A549 (cell line): ENCODE measurements at regions of chr3 and their contacts with region 1.

Region 1: DNA sequence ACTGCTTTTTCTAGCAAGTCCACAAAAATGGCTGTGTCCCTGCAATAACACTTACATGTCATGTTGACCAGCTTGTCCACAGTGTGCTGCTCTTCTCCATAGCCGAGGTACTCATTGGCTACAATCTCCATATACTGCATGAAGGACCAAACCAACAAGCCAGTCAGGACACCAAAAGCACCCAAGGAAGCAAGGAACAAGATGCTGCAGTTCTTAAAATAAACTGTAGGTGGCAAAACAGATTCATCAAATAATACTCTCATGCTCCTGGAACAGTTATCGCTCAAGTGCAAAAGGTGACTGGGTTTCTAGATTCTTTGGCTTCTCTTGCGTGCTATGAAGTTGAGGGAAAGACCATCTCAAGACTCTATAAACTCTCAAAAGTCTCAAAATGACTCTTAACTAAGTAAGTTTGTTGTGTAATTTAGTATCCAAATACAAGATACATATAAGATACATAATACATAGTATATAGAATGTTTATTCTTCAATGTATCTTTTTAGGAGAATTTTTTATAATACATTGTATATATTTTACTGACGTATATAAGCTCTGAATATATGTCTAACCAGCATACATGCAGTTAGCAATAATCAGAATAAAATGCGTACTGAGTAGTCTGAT is 57.0 kb downstream of the NEK10 start:
- DNase-seq: peak; percentile 59 to 84
- ATAC-seq: peak; percentile 90 to 93
- H3K4me3 ChIP-seq: no peak overlapping the region
- H3K27ac ChIP-seq: peak overlapping the region; percentile 65 to 77; a peak in 5 of 6 replicates
- H3K4me1 ChIP-seq: peaks cover 24% of the 10 kb centered on the region
- CTCF ChIP-seq: peak; percentile 84
- EP300 ChIP-seq: no peak
- POLR2A ChIP-seq: no peak
- RAD21 ChIP-seq: peak; percentile 88 to 90

Region 2: DNA sequence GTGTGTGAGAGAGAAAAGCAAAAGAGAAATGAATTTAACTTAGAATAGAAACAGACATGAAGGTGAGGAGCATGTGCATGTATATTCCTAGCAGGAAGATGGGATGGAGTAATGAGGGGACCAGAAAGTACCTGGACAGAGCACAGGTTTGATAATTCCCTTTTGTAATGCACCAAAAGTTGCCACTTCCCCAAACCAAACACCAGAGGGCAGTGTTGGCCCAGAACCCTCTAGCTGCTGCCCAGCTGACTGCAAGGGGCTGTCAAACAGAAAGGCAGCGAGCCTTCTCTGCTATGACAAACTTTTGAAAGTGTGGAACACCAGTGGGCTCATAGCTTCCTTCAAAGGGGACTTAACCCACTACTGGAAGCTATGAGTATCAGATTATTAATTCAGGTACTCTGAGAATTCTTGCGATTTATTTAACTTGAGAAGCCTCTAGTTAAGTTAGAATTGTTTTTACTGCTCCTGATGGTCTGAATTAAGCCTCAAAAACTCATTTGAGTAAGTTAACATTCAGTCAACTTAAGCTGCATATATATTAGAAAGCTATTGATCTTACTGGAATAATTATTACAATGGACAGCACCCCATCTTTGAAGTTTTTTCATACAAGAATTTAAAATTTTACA is 177.9 kb before region 1 on chr3:
- CTCF ChIA-PET with region 1: interaction called, 10 read pairs
- POLR2A ChIA-PET with region 1: no interaction called
- DNase-seq: peak; percentile 43 to 75
- ATAC-seq: peak; percentile 89 to 98
- H3K4me3 ChIP-seq: no peak overlapping the region
- H3K27ac ChIP-seq: no peak overlapping the region
- H3K4me1 ChIP-seq: peaks cover 16% of the 10 kb centered on the region; the same call in 2 of the 3 replicates
- CTCF ChIP-seq: peak; percentile 92
- EP300 ChIP-seq: no peak
- POLR2A ChIP-seq: no peak
- RAD21 ChIP-seq: peak; percentile 94 to 98

Region 3: DNA sequence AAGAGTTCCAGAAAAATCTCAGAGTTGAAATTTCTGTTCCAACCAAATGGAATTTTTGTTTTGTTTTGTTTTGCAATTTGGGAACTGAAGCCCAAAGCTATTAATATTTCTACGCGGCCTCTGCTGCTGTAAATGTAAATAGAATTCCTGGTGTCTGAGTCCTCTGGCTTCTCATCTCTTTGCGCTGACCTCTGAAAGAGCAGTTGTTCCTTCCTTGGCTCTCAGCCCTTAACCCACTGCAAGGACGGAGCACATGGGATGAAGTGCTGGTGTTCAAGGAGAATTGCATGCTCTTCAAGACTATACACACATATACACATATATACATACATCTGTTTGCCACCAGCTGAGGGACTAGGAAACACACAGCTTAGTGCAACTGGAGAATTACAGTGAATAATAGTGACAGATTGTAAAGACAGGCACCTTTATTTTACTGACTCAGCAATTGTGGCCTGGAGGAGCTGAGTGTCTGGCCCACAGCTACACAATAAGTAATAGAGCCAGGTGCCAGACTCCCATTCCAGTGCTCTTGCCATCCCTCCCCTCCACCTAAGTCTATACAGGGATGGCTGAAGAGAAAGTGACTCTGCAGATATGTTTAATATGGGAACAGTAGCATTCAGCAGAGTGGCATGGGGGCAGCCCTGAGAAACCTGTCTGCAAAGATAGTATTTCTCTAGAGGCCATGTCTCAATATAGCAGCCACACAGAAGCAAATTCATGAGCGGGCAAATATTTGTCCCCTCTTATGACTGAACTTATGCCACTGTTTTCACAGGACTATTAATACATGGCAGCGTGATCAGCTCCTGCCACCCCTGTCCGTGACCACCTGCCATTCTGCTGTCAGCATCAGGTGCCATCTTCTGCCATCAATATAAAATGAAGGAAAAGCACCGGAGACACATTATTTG is 14.7 kb after region 1 on chr3:
- CTCF ChIA-PET with region 1: interaction called, 15 read pairs
- POLR2A ChIA-PET with region 1: no interaction called
- DNase-seq: peak in 1 of 2 experiments; percentile 50
- ATAC-seq: peak; percentile 60 to 80
- H3K4me3 ChIP-seq: no peak overlapping the region
- H3K27ac ChIP-seq: peak overlapping the region; percentile 7 to 61; a peak in 4 of 6 replicates
- H3K4me1 ChIP-seq: peaks cover 30% of the 10 kb centered on the region
- CTCF ChIP-seq: no peak
- EP300 ChIP-seq: no peak
- POLR2A ChIP-seq: no peak
- RAD21 ChIP-seq: no peak

Region 4: DNA sequence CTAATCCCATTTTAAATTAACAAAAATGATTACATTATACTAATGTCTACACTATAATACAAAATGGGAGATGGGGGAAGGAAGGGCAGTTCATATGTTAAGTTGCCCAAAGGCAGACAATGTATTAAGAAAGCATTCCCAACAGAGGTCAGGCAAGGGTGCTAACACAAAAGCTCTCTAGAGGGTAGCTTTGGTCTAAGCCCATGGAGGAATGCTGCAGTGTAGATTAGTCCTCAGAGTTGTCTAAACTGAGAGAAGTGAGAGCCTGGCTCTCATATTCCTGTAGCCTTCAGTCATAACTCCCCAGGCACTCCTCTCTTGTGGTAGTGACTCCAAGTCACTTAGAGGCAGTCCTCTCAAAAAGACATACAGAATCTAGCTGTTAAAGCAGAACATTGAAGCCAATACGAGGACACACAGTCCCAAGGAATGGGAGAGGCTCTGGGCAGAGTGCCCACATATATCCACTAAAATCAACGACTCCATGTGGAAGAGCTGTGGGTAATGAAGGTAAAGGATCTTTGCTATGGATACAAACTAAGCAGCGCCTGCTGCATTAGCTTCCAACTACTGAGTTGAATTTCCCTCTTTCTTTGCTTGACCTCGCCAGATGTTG is 42.5 kb after region 1 on chr3:
- CTCF ChIA-PET with region 1: interaction called, 10 read pairs
- POLR2A ChIA-PET with region 1: no interaction called
- DNase-seq: no peak
- ATAC-seq: no peak; a peak in 1 of 6 replicates
- H3K4me3 ChIP-seq: no peak overlapping the region
- H3K27ac ChIP-seq: no peak overlapping the region; a peak in 1 of 6 replicates
- H3K4me1 ChIP-seq: peaks cover 13% of the 10 kb centered on the region
- CTCF ChIP-seq: no peak
- EP300 ChIP-seq: no peak
- POLR2A ChIP-seq: no peak
- RAD21 ChIP-seq: no peak

Region 5: GRCh38 chr3:27467545-27467944 is 155.4 kb after region 1 on chr3:
- CTCF ChIA-PET with region 1: interaction called, 19 read pairs
- POLR2A ChIA-PET with region 1: no interaction called
- DNase-seq: peak; percentile 57 to 60
- ATAC-seq: peak; percentile 82
- H3K4me3 ChIP-seq: no peak overlapping the region
- H3K27ac ChIP-seq: peak overlapping the region in 1 of 2 experiments; percentile 64; a peak in 2 of 6 replicates
- H3K4me1 ChIP-seq: peaks cover 18% of the 10 kb centered on the region; the same call in 2 of the 3 replicates
- CTCF ChIP-seq: peak; percentile 74
- EP300 ChIP-seq: no peak
- POLR2A ChIP-seq: no peak
- RAD21 ChIP-seq: peak; percentile 75 to 79